GM18951 (cell line): ENCODE measurements at regions of chr9 and their contacts with region 1.

Region 1: DNA sequence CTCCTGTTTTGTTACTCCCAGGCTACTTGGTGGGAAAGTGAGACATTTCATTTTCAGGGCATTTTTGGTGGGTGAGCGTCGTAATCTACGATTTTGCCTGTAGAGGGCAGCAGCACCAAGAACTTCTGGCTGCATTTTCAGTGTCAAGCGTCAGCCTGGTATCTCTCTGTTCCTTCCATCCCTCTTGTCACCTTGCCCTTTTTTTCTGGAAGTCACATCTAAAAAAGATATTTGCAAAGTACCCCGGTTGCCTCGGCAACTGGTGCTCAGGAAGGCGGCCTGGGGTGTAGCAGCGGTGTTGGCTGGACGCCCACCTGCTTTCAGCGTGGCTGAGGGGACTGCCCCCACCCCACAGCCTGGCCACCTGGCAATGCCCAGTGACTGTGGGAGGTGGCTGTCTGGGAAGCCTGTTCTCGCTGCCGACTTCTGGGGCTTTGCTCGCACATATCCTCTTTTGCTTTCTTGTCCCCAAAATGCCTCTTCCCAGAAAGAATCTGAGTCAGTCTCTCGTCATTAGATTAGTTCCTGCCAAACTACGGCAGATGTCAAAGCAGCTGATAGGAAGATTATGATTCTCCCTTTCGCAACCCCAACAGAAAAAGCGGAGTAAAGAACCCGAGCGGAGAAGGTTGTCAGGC is 84.5 kb downstream of the ACER2 start:
- POLR2A ChIP-seq: no peak

Region 2: GRCh38 chr9:19102631-19103345 is 390.5 kb before region 1 on chr9 and contains the start of gene HAUS6:
- in situ Hi-C with region 1: no loop called
- POLR2A ChIP-seq: peak; percentile 85

Region 3: GRCh38 chr9:19231126-19231903 is 262.0 kb before region 1 on chr9:
- in situ Hi-C with region 1: no loop called
- POLR2A ChIP-seq: no peak

Region 4: DNA sequence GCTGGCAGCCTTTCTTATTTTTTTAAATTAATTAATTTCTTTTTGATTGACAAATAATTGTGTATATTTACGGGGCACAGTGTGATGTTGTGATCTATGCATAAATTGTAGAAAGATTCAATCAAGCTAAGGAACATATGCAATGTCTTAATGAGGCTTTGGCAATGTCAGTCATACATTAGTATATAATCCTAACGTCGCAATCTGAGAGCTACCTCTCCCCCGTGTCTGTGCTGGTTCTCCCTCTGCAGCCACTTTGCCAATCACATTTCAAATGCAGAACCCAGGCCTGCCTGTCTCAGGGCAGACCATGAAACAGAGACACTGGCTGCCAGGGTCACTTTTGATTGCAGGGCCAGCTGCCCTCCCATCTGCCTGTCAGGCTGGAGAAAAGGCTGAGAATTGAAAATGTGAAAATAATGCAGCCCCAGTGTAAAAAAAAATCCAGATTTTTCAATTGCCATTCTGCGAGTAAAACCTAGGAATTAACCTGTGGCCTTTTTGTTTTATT is 239.2 kb after region 1 on chr9:
- in situ Hi-C with region 1: no loop called
- POLR2A ChIP-seq: no peak

Region 5: GRCh38 chr9:21110708-21111576 is 1617.6 kb after region 1 on chr9:
- in situ Hi-C with region 1: loop called (anchors 25 kb)
- POLR2A ChIP-seq: no peak